HAP-1 (cell line): ENCODE measurements at regions of chr3 and their contacts with region 1.

Region 1: DNA sequence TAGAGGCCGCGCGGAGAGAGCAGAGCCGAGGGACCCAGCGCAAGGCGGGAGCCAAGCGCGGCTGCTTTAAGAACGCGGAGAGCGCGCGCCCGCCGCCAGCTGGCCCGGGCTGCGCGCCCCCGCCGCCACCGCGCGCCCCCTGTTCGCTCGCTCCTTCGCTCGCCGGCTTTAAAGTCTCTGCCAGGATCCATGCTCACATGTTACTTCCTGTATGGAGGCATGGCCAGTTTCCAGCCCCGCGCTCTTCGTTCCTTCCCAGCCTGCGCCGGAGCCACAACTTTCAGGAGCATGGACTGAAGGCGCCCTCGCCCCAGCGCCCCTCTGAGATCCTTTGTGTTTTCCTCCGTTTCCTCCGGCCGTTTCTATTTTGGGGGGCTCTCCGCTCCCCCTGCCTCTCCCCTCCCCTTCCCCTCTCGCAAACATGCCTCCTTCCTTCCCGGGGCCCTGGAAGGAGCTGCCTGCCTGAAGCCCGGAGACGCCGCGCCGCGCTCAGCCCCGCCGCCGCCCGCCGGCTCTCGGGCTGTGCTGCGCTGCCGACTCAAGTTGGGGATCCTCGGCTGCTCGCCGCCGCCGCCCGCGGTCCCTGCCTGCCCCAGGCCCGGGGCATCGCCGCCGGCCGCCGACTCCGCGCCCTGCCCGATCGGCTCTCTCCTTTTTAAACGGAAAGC is at the start of gene PTPRG:
- DNase-seq: peak; percentile 87 to 88
- H3K4me3 ChIP-seq: peak within 1 kb of the TSS; percentile 85
- H3K4me1 ChIP-seq: peaks cover 4% of the 10 kb centered on the region; the same call in 1 of the 2 replicates
- H3K27me3 ChIP-seq: no peaks in the 10 kb centered on the region

Region 2: GRCh38 chr3:61200270-61200669 is 361.2 kb before region 1 on chr3:
- in situ Hi-C with region 1: no loop called
- DNase-seq: no peak
- H3K4me3 ChIP-seq: no peak overlapping the region
- H3K4me1 ChIP-seq: no peaks in the 10 kb centered on the region
- H3K27me3 ChIP-seq: no peaks in the 10 kb centered on the region

Region 3: GRCh38 chr3:61637088-61638051 is 75.9 kb after region 1 on chr3:
- in situ Hi-C with region 1: no loop called
- DNase-seq: peak; percentile 16 to 37
- H3K4me3 ChIP-seq: no peak overlapping the region
- H3K4me1 ChIP-seq: peaks cover 17% of the 10 kb centered on the region
- H3K27me3 ChIP-seq: no peaks in the 10 kb centered on the region

Region 4: DNA sequence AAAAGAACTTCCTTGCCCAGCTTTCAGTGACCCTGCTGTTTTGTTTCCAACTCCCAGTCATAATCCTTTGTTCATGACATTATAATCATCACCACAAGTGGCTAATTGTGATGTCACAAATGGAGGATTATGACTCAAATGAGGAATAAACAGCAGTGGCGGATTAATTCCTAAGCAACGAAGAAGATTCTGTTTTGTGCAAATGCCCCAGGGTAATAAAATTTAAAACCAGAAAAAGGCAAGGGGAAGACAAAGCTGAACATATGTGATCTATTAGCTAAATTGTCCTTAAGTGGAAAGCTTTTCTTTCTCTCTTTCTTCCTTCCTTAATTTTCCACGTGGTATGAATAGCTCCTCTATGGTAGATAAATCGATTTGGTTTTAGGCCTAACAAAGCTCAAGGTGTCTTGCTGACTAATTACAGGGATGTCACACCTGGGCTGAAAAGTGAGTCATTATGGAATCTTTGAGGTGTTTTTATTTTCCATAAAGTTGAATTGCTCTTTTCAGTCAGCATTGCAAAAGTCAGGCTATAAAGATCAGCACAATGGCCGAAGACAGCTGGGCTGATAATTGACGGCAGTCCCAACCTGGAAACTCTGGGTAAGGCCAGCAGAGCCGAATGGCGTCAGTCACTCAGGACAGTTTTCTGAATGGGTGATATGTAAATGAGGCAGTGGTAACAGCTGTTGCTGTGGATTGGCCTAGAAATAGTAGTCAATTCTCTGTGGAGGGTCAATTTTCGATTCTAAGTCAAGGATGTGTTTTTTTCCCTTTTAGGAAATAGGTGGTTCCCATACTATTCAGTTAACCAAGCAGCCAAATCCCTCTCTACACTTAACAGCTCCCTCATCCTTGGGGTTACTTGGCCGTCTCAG is 121.4 kb after region 1 on chr3:
- in situ Hi-C with region 1: loop called (anchors 10 kb)
- DNase-seq: peak; percentile 80 to 98
- H3K4me3 ChIP-seq: no peak overlapping the region
- H3K4me1 ChIP-seq: peaks cover 39% of the 10 kb centered on the region
- H3K27me3 ChIP-seq: peaks cover 6% of the 10 kb centered on the region; the same call in 1 of the 2 replicates